ENCODE measurements at regions of chr2 and their contacts with region 1.

Region 1: GRCh38 chr2:174992886-174993285 is 12.3 kb downstream of the CHN1 start:
- DNase-seq: no peak
- H3K4me3 ChIP-seq: no peak overlapping the region
- H3K27ac ChIP-seq: no peak overlapping the region
- H3K4me1 ChIP-seq: peaks cover 0 to 16% (median 3%) of the 10 kb centered on the region in 6 donors
- H3K27me3 ChIP-seq: no peaks in the 10 kb centered on the region
- CTCF ChIP-seq: no peak
- POLR2A ChIP-seq: no peak

Region 2: DNA sequence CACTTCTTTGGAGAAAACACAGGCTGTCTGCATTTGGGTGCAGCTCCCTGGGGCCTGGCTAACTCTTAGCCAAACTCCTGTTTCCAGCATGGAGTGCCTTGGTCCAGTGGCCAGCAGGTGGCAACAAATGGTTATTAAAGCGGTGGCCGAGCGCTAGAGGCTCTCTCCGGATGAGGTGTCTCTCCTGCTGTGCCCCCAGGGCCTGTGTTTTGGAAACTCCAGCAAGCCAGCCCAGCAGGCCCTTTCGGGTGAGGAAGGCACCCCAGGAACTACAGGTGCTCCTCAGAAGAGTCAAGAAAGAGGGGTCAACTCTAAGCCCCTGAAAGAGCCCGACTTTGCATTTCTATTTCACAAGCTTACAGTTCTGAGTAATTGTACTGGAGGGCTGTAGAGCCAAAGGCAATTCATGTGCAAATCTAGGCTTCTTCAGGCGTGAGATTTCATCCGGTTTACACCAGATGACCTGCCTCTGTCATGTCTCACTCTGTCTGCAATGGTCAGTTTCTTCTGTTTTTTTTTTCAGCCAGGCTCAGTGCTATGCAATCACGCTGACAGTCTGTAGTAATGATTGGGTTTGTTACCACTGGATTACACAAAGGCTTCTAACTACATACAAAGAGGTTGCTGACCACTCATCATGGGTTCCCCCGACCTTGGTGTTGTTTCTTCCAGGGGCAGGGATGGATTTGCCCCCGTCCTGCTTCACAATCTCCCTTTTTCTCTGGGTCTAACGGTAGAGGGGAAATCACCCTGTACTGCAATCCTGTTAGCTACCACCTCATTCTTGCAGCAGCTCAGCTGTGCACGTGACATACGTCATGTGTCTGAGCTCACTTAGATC is 221.0 kb before region 1 on chr2:
- intact Hi-C with region 1: loop called (anchors 5 kb)
- DNase-seq: peak; percentile 84
- H3K4me3 ChIP-seq: no peak overlapping the region
- H3K27ac ChIP-seq: peak overlapping the region in 2 of 8 donors; percentile 11 to 32
- H3K4me1 ChIP-seq: peaks cover 0 to 14% (median 9%) of the 10 kb centered on the region in 6 donors
- H3K27me3 ChIP-seq: peaks cover 0 to 4% (median 0%) of the 10 kb centered on the region in 7 donors
- CTCF ChIP-seq: peak; percentile 33 to 75 (median 63)
- POLR2A ChIP-seq: no peak